ENCODE measurements at regions of chr11 and their contacts with region 1.

Region 1: DNA sequence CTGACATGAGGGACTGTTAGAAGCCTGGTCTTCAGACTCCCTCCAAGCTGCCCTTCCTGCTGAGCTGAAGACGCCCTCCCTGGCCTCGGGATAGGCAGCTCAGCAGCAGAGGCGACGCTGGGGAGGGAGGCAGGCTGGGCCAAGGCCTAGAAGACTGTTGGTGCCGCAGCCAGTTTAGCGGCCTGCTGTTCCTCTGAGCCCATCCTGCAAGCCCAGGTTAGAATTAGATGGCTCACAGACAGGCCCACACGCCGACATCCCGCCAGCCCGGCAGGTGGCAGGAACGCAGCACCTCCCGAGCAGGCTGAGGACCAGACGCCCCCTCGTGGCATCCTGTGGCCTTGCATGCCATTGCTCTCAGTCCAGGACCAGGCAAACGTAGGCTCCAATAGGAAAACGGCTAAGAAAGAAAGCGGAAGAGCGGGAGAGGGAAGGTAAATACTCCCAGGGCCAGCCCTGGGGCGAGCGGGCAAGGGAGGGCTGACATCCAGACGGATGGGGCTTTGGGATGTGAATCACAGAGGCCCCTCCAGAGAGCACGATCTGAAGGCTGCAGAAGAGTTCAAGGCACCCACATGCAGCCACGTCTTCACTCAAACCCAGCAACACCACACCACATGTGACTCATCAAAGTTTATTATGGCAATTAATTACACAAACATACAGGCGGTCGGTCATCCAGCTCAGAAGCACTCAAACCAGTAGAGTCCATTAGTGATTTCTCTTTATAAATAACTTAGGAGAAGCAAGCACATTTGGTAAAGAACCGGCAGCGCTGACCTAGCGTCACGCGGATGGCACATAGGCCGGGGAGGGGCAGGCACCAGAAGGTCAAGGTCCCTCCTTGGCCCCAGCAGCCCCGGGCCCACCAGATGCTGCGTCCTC is 27.6 kb downstream of the CD5 start:
- DNase-seq: peak; percentile 81 to 90
- ATAC-seq: peak; percentile 78 to 88 (median 86)
- H3K4me3 ChIP-seq: no peak overlapping the region
- H3K27ac ChIP-seq: no peak overlapping the region
- H3K4me1 ChIP-seq: peaks cover under 1% of the 10 kb centered on the region
- H3K27me3 ChIP-seq: no peaks in the 10 kb centered on the region
- CTCF ChIP-seq: peak; percentile 97

Region 2: DNA sequence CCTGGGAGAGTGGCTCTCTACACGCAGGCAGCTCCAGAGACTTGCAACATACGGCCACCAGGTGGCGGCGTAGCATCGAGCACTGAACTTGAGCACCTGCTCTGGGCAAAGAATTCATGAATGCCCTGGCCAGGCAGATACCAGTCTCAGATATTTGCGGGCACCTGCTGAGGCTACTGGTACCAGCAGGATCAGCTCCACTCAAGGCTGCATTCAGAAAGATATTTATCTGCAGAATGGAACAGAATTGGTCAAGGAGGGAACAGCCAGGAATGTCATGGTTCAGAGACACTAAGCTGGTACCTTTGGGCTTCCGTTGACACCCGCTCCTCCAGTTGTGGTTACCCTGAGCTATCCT is 298.8 kb before region 1 on chr11:
- intact Hi-C with region 1: loop called in 1 of 2 experiments (anchors 10 kb)
- DNase-seq: peak; percentile 86 to 89
- ATAC-seq: peak; percentile 91 to 99 (median 98)
- H3K4me3 ChIP-seq: no peak overlapping the region
- H3K27ac ChIP-seq: no peak overlapping the region
- H3K4me1 ChIP-seq: peaks cover 7% of the 10 kb centered on the region
- H3K27me3 ChIP-seq: no peaks in the 10 kb centered on the region
- CTCF ChIP-seq: peak; percentile 98

Region 3: DNA sequence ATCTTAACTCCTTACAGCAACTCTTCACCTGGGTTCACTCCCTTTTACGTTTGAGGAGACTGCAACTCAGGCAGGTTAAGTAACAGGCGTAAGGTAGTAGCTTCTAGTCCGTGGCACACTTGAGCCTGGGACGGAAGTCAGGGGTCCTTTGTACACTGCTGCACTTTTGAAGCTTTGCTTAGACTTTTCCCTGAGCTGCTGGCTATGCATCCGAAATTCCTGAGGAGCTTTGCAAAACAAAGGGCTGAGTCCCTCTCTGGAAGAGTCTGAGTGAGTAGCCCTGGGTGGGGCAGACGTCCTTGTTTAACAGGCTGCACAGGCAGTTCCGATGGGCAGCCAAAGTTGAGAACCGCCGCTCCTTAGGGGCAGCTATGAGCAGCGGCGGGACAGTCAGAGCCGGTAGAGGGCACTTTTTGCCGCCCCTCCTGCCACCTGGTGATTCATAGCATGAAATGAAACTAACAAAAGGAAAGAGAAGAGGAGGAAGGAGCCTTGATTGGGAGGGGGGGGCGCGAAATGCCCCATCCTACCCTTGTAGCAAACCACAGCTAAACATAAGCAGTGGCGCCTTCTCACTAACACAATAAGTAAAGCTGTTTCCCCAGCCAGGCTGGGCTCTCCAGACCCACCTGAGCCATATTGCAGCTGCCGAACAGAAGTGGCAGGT is 214.5 kb before region 1 on chr11:
- intact Hi-C with region 1: loop called in 1 of 2 experiments (anchors 5 kb)
- DNase-seq: peak; percentile 65 to 81
- ATAC-seq: peak; percentile 52 to 67 (median 58)
- H3K4me3 ChIP-seq: peak overlapping the region; percentile 96
- H3K27ac ChIP-seq: peak overlapping the region; percentile 94
- H3K4me1 ChIP-seq: peaks cover 66% of the 10 kb centered on the region
- H3K27me3 ChIP-seq: no peaks in the 10 kb centered on the region
- CTCF ChIP-seq: peak; percentile 32

Region 4: DNA sequence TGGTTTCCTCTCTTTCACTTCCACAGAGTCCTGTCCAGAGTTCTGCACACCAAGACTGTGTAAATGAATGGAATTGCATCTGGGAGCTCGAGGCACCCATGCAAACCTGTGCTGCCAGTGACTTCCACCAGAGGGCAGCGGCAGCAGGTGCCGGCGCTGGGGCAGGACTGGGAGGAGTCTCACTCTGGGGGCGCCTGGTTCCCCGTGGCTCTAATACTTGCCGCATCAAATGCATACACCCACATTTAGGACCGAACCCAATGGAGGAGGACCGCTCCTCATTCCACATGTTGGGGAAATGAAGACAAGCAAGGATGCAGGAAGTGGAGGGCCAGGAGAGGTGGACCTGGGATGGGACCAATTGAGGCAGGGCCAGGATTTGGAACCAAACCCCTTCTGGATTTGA is 159.5 kb before region 1 on chr11:
- intact Hi-C with region 1: loop called in 1 of 2 experiments (anchors 1 kb)
- DNase-seq: peak; percentile 31 to 69
- ATAC-seq: peak; percentile 69 to 73 (median 72)
- H3K4me3 ChIP-seq: no peak overlapping the region
- H3K27ac ChIP-seq: no peak overlapping the region
- H3K4me1 ChIP-seq: no peaks in the 10 kb centered on the region
- H3K27me3 ChIP-seq: no peaks in the 10 kb centered on the region
- CTCF ChIP-seq: peak; percentile 83

Region 5: GRCh38 chr11:61187505-61188130 is 57.7 kb after region 1 on chr11:
- intact Hi-C with region 1: loop called in 1 of 2 experiments (anchors 1 kb)
- DNase-seq: peak; percentile 69 to 72
- ATAC-seq: peak; percentile 79 to 89 (median 84)
- H3K4me3 ChIP-seq: no peak overlapping the region
- H3K27ac ChIP-seq: no peak overlapping the region
- H3K4me1 ChIP-seq: no peaks in the 10 kb centered on the region
- H3K27me3 ChIP-seq: peaks cover 0 to 3% (median 0%) of the 10 kb centered on the region in 3 donors
- CTCF ChIP-seq: peak; percentile 93

Measured in psoas muscle (tissue), 8 donors.